Left colon (tissue), 2 donors: ENCODE measurements at regions of chr12 and their contacts with region 1.

Region 1: GRCh38 chr12:6062757-6063735 is 61.4 kb downstream of the VWF start:
- DNase-seq: peak; percentile 35 to 54
- ATAC-seq: peak; percentile 81

Region 2: DNA sequence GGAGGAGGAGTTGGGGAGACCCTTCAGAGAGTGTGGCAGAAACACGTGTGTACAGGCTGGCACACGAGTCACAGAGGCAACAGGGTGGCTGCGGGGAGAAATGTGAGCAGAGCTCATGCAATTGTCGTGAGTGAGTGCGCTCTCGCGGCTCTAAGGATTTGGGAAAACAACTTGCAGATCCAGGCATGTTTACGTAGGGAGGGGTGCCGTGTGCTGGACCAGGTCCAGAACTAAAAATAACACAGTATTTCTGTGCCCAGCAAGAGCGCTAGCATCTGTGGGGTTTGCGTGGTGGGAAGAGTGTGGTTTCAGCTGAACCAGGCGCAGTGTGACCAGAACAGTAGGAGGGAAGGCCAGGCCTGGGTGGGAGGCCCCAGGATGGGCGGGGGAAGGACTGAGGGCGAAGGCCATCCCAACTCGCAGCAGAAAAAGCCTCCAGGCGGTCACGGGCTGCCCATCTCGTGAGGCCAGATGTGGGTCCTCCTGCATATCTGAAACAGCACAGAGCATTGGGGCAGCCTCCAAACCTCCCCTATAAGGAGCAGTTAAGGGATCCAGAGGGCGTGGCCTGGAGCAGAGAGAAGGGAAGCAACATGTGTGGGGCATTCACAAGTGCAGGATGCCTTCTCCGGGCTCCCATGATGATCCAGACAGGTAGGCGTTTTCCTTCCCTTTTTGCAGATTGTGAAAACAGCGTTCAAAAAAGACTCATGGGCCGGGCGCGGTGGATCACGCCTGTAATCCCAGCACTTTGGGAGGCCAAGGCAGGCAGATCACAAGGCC is 119.3 kb after region 1 on chr12:
- intact Hi-C with region 1: loop called in 1 of 2 experiments (anchors 10 kb)
- DNase-seq: peak; percentile 67 to 78
- ATAC-seq: peak; percentile 51

Region 3: GRCh38 chr12:6285063-6285477 is 222.0 kb after region 1 on chr12:
- intact Hi-C with region 1: loop called (anchors 5 to 10 kb)
- DNase-seq: peak in 1 of 2 donors; percentile 48
- ATAC-seq: peak; percentile 65